CD14-positive monocyte (primary cell): ENCODE measurements at regions of chr1 and their contacts with region 1.

Region 1: DNA sequence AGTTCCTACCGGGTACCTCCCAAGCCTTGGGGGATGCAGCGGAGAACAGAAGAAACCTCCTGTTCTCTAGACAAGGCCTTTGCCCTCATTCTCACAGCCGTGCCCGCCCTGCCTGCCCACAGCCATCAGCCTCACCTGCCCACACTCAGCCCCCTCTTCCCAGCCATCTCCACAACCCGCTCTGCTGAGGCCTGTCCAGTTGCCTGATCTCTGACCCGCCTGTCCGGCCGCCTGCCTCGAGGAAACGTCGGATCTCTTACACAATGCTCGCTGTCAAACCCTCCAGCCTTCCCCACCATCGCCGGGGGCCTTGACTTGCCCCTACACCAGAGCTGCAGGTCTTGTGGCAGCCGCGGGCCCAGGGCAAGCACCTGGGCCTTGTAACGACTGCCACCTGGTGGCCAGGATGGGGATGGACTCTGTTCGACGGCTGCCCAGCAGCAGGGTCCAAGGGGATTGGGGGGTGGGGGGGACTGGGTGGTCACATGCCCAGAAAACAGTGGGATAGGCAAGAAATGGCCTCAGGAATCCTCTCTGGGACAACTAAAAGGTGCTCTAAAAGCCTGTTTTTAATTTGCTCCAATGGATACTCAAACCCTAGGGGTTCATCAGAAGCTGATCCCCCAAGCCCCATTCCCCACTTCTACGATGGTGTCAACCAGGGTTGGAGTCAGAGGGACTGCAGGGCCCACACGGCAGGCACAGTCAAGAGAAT is 31.0 kb downstream of the SLC45A1 start:
- DNase-seq: peak; percentile 48 to 62 (median 58)
- H3K4me3 ChIP-seq: no peak overlapping the region
- H3K4me3 Mint-ChIP-seq: no peak overlapping the region
- H3K27ac ChIP-seq: no peak overlapping the region
- H3K27ac Mint-ChIP-seq: peak overlapping the region in 2 of 7 donors; percentile 5 to 64
- H3K4me1 ChIP-seq: no peaks in the 10 kb centered on the region
- H3K4me1 Mint-ChIP-seq: peaks cover 2% of the 10 kb centered on the region
- H3K27me3 ChIP-seq: no peaks in the 10 kb centered on the region
- H3K27me3 Mint-ChIP-seq: peaks cover 1 to 7% (median 6%) of the 10 kb centered on the region in 3 donors
- CTCF ChIP-seq: peak; percentile 88

Region 2: DNA sequence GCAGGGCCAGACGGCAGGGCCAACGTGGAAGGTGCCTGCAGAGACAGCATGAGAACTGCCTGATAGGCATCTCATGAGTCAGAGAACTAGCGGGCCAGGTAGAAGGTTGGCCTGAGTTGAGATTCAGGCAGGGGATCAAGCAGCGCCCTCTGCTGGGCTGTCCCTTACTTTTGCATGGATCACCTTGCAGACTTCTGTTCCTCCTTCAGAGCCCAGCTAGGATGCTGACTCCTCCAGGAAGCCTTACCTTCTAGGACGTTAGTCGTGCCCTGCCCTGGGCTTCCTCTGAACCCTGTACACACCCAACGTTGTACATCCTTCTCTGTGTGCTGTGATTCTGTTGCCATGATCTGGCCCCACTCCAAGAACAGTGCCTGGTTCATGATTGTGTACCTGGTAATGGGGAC is 809.2 kb before region 1 on chr1:
- intact Hi-C with region 1: no loop called
- DNase-seq: no peak
- H3K4me3 ChIP-seq: no peak overlapping the region
- H3K4me3 Mint-ChIP-seq: no peak overlapping the region
- H3K27ac ChIP-seq: no peak overlapping the region
- H3K27ac Mint-ChIP-seq: no peak overlapping the region
- H3K4me1 ChIP-seq: no peaks in the 10 kb centered on the region
- H3K4me1 Mint-ChIP-seq: peaks cover 2% of the 10 kb centered on the region
- H3K27me3 ChIP-seq: no peaks in the 10 kb centered on the region
- H3K27me3 Mint-ChIP-seq: peaks cover 2 to 6% (median 5%) of the 10 kb centered on the region in 3 donors
- CTCF ChIP-seq: peak; percentile 20

Region 3: GRCh38 chr1:7983086-7983778 is 365.7 kb before region 1 on chr1:
- intact Hi-C with region 1: loop called (anchors 1 to 5 kb)
- DNase-seq: no peak
- H3K4me3 ChIP-seq: no peak overlapping the region
- H3K4me3 Mint-ChIP-seq: no peak overlapping the region
- H3K27ac ChIP-seq: no peak overlapping the region
- H3K27ac Mint-ChIP-seq: peak overlapping the region in 3 of 7 donors; percentile 7 to 41 (median 38)
- H3K4me1 ChIP-seq: no peaks in the 10 kb centered on the region
- H3K4me1 Mint-ChIP-seq: peaks cover 4% of the 10 kb centered on the region
- H3K27me3 ChIP-seq: no peaks in the 10 kb centered on the region
- H3K27me3 Mint-ChIP-seq: no peaks in the 10 kb centered on the region
- CTCF ChIP-seq: no peak

Region 4: GRCh38 chr1:7989762-7990428 is 359.0 kb before region 1 on chr1:
- intact Hi-C with region 1: loop called in 1 of 2 experiments (anchors 5 kb)
- DNase-seq: no peak
- H3K4me3 ChIP-seq: no peak overlapping the region
- H3K4me3 Mint-ChIP-seq: no peak overlapping the region
- H3K27ac ChIP-seq: no peak overlapping the region
- H3K27ac Mint-ChIP-seq: peak overlapping the region in 1 of 7 donors; percentile 58
- H3K4me1 ChIP-seq: peaks cover 14 to 18% of the 10 kb centered on the region in 2 donors
- H3K4me1 Mint-ChIP-seq: peaks cover 15% of the 10 kb centered on the region
- H3K27me3 ChIP-seq: no peaks in the 10 kb centered on the region
- H3K27me3 Mint-ChIP-seq: peaks cover 0 to 5% (median 0%) of the 10 kb centered on the region in 3 donors
- CTCF ChIP-seq: no peak

Region 5: DNA sequence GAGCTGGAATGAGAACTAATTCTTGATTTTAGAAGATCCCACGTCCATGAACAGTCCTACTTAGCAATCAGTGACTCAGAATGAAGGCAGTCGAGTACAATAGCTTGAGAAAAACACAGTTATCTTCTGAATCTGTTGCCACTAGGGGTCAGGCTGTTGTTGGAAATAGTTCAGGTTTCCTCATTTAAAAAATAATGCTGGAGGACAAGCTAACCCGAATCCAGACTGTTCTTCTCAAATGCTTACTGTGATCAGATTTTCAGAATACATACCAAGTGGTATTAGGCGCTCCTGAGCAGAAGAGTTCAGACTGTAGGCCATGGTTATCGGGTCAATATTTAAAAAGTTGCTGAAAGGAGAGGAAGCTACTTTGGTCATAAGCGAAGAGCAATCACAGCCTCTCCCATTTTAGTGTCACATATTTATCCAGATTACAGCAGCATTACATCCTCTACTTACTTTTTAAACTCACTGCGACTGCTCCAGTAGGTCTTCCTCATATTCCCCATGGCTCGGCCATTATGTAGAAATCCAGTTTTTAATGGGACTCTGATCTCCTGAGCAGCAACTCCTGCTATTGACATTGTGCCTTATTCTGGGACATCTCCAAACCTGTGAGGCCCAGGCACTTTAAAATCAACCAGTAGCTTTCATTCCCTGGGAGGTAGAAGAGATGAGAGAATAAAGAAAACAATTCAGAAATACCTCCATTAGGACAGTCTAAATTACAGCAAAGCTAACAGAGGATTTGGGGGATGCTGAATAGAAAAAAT is 333.7 kb before region 1 on chr1:
- intact Hi-C with region 1: loop called (anchors 2 to 5 kb)
- DNase-seq: peak; percentile 44 to 68 (median 65)
- H3K4me3 ChIP-seq: no peak overlapping the region
- H3K4me3 Mint-ChIP-seq: no peak overlapping the region
- H3K27ac ChIP-seq: no peak overlapping the region
- H3K27ac Mint-ChIP-seq: peak overlapping the region in 1 of 7 donors; percentile 63
- H3K4me1 ChIP-seq: peaks cover 6 to 7% of the 10 kb centered on the region in 2 donors
- H3K4me1 Mint-ChIP-seq: peaks cover 11% of the 10 kb centered on the region
- H3K27me3 ChIP-seq: peaks cover 15 to 16% of the 10 kb centered on the region in 2 donors
- H3K27me3 Mint-ChIP-seq: peaks cover 5 to 12% (median 8%) of the 10 kb centered on the region in 3 donors
- CTCF ChIP-seq: peak; percentile 78

Region 6: DNA sequence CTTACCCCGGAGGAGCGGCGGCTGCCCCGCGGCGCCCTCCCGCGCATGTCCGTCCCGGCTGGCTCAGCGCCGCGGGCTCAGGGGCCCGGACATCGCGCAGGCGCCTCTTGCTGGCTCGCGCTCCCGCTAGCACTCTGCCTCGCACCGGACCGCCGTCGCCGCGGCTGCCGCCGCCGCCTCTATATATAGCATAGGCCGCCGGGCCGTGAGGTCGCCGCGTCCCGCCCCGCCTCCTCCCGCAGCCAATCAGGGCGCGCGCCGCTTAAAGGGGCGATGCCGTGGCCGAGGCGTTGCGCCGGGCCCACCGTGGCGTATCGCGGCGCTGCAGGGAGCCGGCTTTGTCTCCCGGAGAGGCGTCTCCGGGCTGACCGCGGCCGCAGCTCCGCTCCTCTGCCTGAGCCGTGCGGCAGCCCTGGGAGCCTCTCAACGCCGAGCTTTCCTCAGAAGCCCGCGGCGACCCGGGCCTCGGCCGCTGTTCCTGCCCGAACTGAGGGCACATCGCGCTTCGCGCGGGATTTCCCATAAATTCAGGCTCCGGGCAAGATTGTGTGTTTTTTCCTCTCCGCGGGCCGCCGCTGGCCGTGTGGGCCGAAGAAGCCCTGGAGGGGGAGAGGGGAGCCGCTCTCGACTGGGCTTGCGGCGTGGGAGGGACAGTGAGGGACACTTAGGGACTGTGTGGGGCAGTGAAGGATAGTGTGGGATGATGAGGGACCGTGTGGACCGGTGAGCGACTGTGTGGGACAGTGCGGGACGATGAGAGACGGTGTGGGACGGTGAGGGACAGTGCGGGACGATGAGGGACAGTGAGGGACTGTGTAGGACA is 322.6 kb before region 1 on chr1 and contains the start of gene ERRFI1:
- intact Hi-C with region 1: loop called (anchors 1 to 2 kb)
- DNase-seq: peak; percentile 85 to 89 (median 89)
- H3K4me3 ChIP-seq: peak within 1 kb of the TSS; percentile 7 to 68 (median 29)
- H3K4me3 Mint-ChIP-seq: peak within 1 kb of the TSS; percentile 92 to 97
- H3K27ac ChIP-seq: no peak within 1 kb of the TSS
- H3K27ac Mint-ChIP-seq: peak within 1 kb of the TSS in 4 of 7 donors; percentile 7 to 71 (median 42)
- H3K4me1 ChIP-seq: peaks cover 10 to 19% of the 10 kb centered on the region in 2 donors
- H3K4me1 Mint-ChIP-seq: peaks cover 12% of the 10 kb centered on the region
- H3K27me3 ChIP-seq: peaks cover 32 to 77% of the 10 kb centered on the region in 2 donors
- H3K27me3 Mint-ChIP-seq: peaks cover 53 to 78% (median 55%) of the 10 kb centered on the region in 3 donors
- CTCF ChIP-seq: no peak
- polyA plus RNA-seq, gene ERRFI1: 0.08 to 1.5 (median 0.28) TPM

Region 7: DNA sequence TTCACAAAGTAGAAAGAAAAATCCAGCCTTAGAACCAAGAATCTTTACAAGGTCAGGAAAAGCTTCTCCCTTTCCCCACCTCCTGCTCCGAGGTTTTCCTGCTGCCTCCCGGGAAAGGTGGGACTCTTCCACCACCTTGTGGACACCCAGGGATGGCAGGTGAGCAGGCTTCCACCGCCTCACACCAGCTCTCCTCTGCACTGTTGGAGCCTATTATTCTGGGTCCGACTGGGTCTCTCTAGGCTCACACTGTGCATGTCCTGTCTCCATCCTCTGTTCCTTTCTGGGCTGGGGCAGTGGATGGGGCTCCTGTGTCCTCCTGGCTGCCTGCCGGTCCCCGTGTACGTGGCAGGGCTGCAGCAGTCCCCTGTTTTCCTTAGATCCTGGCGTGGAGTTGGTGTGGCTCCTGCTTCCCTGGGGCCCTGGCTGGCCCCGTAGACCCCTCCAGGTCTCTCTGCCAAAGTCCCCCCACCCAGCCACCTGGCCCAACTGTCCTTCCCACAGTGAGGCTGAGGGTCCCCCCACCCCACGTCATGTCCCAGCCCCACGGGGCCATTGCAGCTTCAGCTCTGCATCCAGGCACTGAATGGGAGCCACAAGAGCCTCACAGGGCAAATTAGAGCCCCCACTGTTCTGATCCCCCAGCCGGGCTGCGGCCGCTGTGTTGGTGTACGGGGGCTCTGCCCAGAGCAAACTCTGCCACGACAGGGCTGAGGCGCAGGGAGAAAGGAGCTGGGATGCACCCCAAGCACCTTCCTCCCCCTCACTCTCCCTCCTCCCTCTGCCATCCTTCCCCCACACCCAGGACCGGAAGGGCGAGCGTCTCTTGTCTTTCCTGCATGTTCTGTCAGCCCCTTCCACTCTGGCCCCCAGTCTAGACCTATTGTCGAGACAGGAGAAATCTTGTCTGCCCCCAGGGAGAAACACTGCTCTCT is 34.3 kb before region 1 on chr1:
- intact Hi-C with region 1: no loop called
- DNase-seq: peak; percentile 11 to 27 (median 24)
- H3K4me3 ChIP-seq: no peak overlapping the region
- H3K4me3 Mint-ChIP-seq: peak overlapping the region in 1 of 2 donors; percentile 62
- H3K27ac ChIP-seq: no peak overlapping the region
- H3K27ac Mint-ChIP-seq: no peak overlapping the region
- H3K4me1 ChIP-seq: peaks cover 10 to 14% of the 10 kb centered on the region in 2 donors
- H3K4me1 Mint-ChIP-seq: peaks cover 20% of the 10 kb centered on the region
- H3K27me3 ChIP-seq: peaks cover 3 to 52% of the 10 kb centered on the region in 2 donors
- H3K27me3 Mint-ChIP-seq: peaks cover 40 to 60% (median 52%) of the 10 kb centered on the region in 3 donors
- CTCF ChIP-seq: peak; percentile 71

Region 8: DNA sequence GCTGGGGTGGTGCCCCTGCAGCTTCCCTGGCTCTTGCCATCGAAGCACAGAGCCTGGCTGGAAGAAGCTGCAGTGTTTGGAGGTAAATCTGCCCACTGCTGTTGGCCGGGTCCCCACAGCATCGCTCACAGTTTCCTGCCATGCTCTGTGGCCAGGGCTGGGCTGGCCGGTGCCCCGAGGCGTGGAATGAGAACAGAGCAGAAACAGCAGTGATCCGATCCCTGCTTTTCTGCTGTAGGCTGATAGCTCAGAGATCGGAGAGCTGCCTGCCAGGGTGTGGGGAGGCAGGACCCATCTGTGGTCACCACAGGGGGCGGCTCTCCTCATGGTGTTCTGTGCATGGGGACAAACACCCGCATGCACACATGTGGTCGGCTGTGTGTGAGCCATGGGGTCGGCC is 19.5 kb before region 1 on chr1:
- intact Hi-C with region 1: no loop called
- DNase-seq: no peak
- H3K4me3 ChIP-seq: no peak overlapping the region
- H3K4me3 Mint-ChIP-seq: no peak overlapping the region
- H3K27ac ChIP-seq: no peak overlapping the region
- H3K27ac Mint-ChIP-seq: no peak overlapping the region
- H3K4me1 ChIP-seq: no peaks in the 10 kb centered on the region
- H3K4me1 Mint-ChIP-seq: no peaks in the 10 kb centered on the region
- H3K27me3 ChIP-seq: no peaks in the 10 kb centered on the region
- H3K27me3 Mint-ChIP-seq: peaks cover 1 to 9% (median 5%) of the 10 kb centered on the region in 3 donors
- CTCF ChIP-seq: no peak